Sigmoid colon (tissue), 7 donors: ENCODE measurements at regions of chr15 and their contacts with region 1.

Region 1: DNA sequence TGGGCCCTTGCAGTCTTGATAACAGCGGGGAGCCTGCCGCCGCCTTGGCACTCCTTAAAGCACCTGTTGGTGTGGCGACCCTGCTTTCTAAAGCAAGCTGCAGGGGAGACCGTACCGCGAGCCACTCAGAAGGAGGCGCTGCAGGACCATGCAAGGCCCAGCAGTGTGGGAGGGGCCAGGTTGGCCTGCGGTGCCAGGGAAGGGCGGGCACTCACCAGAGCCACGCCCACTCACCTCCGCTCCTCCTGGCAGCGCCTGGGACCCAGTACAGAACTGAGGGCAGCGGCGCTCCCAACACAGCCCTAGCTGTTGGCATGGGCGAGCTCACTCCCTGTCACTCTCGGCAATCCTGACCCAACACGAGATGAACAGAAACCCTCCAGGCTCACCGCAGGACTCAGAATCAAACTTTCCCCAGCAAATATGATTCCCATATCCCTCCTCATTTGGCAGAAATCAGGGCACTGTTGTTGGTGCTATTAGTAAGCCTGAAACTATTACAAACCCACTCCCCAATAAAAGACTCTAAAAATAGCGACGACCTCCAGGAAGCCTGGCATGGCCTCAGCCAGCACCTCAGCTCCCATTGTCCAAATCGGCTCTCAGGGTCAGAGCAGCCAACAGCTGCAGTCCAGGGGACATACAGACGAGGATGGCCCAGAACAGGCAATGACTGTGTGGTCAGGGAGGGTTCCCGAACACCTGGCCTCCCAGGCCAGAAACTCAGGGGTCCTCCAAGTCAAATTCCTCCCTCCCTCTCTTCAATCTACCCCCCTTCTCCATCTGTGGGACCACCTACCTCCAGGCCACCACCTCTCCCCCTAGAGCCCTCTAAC is 77.2 kb downstream of the TBC1D2B start:
- DNase-seq: peak; percentile 88
- H3K4me3 ChIP-seq: no peak overlapping the region
- H3K27ac ChIP-seq: no peak overlapping the region
- H3K4me1 ChIP-seq: peaks cover 0 to 34% (median 27%) of the 10 kb centered on the region in 4 donors
- H3K27me3 ChIP-seq: no peaks in the 10 kb centered on the region
- CTCF ChIP-seq: peak; percentile 43 to 58 (median 49)
- EP300 ChIP-seq: no peak
- POLR2A ChIP-seq: no peak

Region 2: GRCh38 chr15:77966540-77967290 is 33.6 kb before region 1 on chr15:
- intact Hi-C with region 1: loop called (anchors 5 kb)
- DNase-seq: peak; percentile 74
- H3K4me3 ChIP-seq: no peak overlapping the region
- H3K27ac ChIP-seq: no peak overlapping the region
- H3K4me1 ChIP-seq: no peaks in the 10 kb centered on the region
- H3K27me3 ChIP-seq: no peaks in the 10 kb centered on the region
- CTCF ChIP-seq: peak; percentile 62 to 80 (median 74)
- EP300 ChIP-seq: no peak
- POLR2A ChIP-seq: no peak

Region 3: GRCh38 chr15:78049691-78050440 is 49.6 kb after region 1 on chr15:
- intact Hi-C with region 1: loop called (anchors 5 kb)
- DNase-seq: no peak
- H3K4me3 ChIP-seq: no peak overlapping the region
- H3K27ac ChIP-seq: peak overlapping the region; percentile 12 to 75 (median 62)
- H3K4me1 ChIP-seq: peaks cover 0 to 78% (median 62%) of the 10 kb centered on the region in 4 donors
- H3K27me3 ChIP-seq: no peaks in the 10 kb centered on the region
- CTCF ChIP-seq: no peak
- EP300 ChIP-seq: no peak
- POLR2A ChIP-seq: no peak